ENCODE measurements at regions of chr19 and their contacts with region 1.

Region 1: GRCh38 chr19:10695401-10696398 is 5.5 kb upstream of the QTRT1 start:
- DNase-seq: peak; percentile 96
- H3K4me3 Mint-ChIP-seq: peak overlapping the region; percentile 68
- H3K27ac Mint-ChIP-seq: no peak overlapping the region
- H3K4me1 Mint-ChIP-seq: peaks cover 16% of the 10 kb centered on the region
- H3K27me3 Mint-ChIP-seq: peaks cover 34% of the 10 kb centered on the region

Region 2: DNA sequence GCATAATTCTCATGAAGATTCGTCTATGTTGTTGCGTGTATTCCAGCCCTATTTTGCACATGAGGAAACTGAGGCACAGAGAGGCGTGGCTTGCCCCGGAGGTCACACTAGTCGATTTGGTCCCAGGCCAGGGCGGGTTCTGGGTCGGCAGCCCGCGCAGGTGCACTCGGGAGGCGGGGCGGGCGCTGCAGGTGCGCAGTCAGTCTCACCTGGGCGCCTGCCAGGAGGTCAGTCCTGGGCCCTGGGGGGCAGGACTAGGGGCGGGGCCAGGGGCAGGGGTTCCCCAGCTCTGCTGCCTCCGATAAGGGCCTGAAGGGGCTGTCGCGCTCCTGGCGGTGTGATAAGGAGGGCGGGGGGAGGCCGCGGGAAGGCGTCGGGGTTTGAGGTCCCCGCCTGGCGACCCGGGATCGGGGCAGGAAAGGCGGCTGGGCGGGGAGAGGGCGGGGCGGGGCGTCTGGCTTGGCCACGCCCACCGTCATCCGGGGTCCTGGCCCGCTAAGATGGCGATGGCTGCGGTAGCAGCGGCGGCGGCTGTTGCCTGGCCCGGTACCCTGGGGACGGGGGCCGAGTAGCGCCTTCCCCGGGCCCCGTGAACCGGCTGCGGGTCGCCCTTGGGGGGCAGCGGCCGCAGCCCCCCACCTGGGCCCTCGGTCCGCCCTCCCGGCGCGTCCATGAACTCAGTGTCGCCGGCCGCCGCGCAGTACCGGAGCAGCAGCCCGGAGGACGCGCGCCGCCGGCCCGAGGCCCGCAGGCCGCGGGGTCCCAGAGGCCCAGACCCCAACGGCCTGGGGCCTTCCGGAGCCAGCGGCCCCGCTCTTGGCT is 152.1 kb before region 1 on chr19 and contains the start of gene ATG4D:
- CTCF ChIA-PET with region 1: interaction called, 13 read pairs
- DNase-seq: peak; percentile 87
- H3K4me3 Mint-ChIP-seq: peak within 1 kb of the TSS; percentile 89
- H3K27ac Mint-ChIP-seq: peak within 1 kb of the TSS; percentile 88
- H3K4me1 Mint-ChIP-seq: peaks cover 25% of the 10 kb centered on the region
- H3K27me3 Mint-ChIP-seq: peaks cover 43% of the 10 kb centered on the region

Region 3: GRCh38 chr19:10574462-10574861 is 121.2 kb before region 1 on chr19:
- CTCF ChIA-PET with region 1: interaction called, 156 read pairs
- DNase-seq: no peak
- H3K4me3 Mint-ChIP-seq: no peak overlapping the region
- H3K27ac Mint-ChIP-seq: peak overlapping the region; percentile 6
- H3K4me1 Mint-ChIP-seq: peaks cover 26% of the 10 kb centered on the region
- H3K27me3 Mint-ChIP-seq: peaks cover 18% of the 10 kb centered on the region

Region 4: DNA sequence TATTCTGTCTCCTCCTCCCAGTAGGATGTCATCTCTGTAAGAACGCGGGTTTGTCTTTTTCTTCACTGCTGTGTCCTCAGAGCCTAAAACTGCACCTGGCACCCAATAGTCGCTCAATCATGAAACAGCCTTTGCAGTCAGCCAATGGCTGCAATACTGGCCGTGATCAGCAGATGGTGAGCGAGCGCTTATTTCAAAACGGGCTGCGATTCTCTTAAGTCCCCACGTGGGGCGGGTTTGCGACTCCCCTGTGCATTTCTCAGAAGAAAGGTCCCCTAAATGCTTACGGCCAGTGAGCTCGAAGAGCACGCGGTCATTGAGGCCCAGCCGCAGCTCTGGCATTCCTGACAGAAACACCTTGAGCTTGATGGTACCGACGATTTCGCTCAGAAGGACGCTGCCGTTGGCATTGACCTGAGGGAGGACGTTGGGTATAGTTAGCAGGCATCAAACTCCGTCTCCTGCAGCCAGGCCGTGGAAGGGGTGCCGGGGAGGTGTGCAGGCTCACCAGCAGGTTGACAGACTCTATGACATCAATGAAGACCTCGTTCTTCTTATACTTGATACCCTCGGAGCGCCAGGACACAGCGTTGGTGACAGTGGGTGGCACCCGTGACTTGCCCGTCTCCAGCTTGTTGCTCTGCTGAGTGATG is 114.6 kb before region 1 on chr19:
- CTCF ChIA-PET with region 1: interaction called, 156 read pairs
- DNase-seq: peak; percentile 95
- H3K4me3 Mint-ChIP-seq: no peak overlapping the region
- H3K27ac Mint-ChIP-seq: no peak overlapping the region
- H3K4me1 Mint-ChIP-seq: peaks cover 17% of the 10 kb centered on the region
- H3K27me3 Mint-ChIP-seq: peaks cover 43% of the 10 kb centered on the region

Region 5: DNA sequence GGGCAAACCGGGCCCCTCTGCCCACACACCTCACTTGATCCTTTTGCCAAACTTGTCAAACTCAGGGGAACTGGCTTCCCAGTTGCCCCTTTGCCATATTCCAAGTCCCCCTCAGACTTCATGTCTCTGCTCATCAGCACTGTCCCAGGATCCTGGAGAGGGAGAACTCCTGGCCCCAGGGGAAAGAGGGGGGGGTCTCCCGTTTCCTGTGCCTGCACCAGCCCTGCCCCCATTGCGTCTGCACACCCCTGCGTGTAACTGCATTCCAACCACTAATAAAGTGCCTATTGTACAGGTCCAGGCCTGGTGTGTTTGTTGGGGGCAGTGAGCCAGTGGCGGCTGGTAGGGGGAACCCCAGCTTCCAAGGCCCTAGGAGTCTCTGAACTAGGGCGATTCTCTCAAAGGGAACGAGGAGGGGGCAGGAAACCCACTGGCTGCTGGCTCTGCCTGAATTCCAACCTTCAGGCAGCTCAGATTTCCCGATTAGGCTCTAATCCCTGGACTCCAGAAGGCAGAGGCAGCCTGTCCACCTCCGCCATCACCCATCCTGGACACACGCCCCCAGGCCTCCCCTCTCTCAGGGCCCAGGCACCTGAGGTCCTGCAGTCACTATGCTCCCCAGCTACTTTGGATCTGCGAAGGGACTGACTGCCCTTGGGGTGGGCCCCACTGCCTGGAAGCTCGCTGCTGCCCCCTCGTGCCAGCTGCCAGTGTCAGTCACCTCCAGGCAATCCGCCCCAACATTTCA is 51.3 kb before region 1 on chr19:
- CTCF ChIA-PET with region 1: interaction called, 25 read pairs
- DNase-seq: peak; percentile 89
- H3K4me3 Mint-ChIP-seq: no peak overlapping the region
- H3K27ac Mint-ChIP-seq: peak overlapping the region; percentile 74
- H3K4me1 Mint-ChIP-seq: peaks cover 3% of the 10 kb centered on the region
- H3K27me3 Mint-ChIP-seq: no peaks in the 10 kb centered on the region

Region 6: GRCh38 chr19:10653715-10654492 is 41.8 kb before region 1 on chr19 and contains the start of gene ILF3:
- CTCF ChIA-PET with region 1: interaction called, 11 read pairs
- DNase-seq: peak; percentile 100
- H3K4me3 Mint-ChIP-seq: peak within 1 kb of the TSS; percentile 93
- H3K27ac Mint-ChIP-seq: peak within 1 kb of the TSS; percentile 98
- H3K4me1 Mint-ChIP-seq: peaks cover 40% of the 10 kb centered on the region
- H3K27me3 Mint-ChIP-seq: peaks cover 3% of the 10 kb centered on the region

Region 7: GRCh38 chr19:10670182-10670581 is 25.5 kb before region 1 on chr19:
- CTCF ChIA-PET with region 1: interaction called, 14 read pairs
- DNase-seq: no peak
- H3K4me3 Mint-ChIP-seq: no peak overlapping the region
- H3K27ac Mint-ChIP-seq: no peak overlapping the region
- H3K4me1 Mint-ChIP-seq: peaks cover 12% of the 10 kb centered on the region
- H3K27me3 Mint-ChIP-seq: no peaks in the 10 kb centered on the region

Region 8: GRCh38 chr19:10723591-10723990 is 27.9 kb after region 1 on chr19:
- CTCF ChIA-PET with region 1: no interaction called
- DNase-seq: no peak
- H3K4me3 Mint-ChIP-seq: no peak overlapping the region
- H3K27ac Mint-ChIP-seq: no peak overlapping the region
- H3K4me1 Mint-ChIP-seq: peaks cover 63% of the 10 kb centered on the region
- H3K27me3 Mint-ChIP-seq: no peaks in the 10 kb centered on the region